MCF 10A (cell line): ENCODE measurements at regions of chr20 and their contacts with region 1.

Region 1: DNA sequence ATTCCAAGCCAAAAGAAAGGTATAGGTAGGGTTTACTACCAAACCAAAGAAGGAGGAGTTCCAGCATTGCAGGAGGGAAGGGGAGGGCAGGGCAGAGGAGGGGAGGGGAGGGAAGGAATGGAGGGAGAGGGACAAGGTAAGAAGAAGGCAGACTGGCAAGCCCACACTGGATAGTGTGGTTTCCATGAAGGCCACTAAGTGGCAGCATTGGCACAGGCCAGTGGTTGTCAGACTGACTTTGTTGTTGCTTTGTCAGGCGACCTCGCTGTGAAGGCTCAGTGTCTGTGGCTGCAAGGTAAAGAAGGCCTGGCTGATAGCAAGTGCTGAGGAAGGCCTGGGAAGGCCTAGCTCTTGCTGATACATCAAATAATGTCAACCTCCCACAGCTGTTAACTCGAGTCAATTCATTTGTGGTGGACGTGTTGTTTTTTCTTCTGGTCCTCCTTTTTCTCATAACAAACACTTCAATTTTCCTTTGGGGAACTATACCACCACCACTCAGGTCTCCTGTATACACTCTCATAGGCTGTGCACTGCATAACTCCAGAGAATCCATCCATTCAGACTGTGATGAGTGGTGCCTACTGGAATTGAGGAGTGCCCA is 7.7 kb upstream of the ZNF334 start:
- DNase-seq: peak; percentile 61
- H3K4me3 Mint-ChIP-seq: no peak overlapping the region
- H3K27ac Mint-ChIP-seq: no peak overlapping the region
- H3K4me1 Mint-ChIP-seq: no peaks in the 10 kb centered on the region
- H3K27me3 Mint-ChIP-seq: peaks cover 16% of the 10 kb centered on the region
- CTCF ChIP-seq: peak; percentile 84

Region 2: DNA sequence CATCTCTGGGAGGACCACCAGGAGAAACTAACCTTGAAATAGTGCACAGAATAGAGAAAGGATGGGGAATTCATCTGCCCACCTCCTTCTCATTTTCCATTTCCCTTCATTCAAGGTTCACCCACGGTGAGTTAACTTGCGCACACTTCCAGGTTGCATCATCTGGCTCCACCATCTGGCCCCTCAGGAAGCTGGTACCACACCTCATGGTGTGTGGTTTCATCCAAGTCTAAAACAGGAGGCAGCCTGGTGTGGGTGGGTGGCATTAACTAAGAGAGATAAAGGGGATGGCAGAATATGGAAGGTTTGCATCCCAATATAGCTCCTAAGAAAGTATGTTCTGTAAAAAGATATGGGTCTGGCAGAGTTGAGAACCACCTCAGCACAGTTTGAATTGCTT is 11.6 kb before region 1 on chr20:
- CTCF ChIA-PET with region 1: interaction called, 17 read pairs
- POLR2A ChIA-PET with region 1: interaction called, 3 read pairs
- intact Hi-C with region 1: no loop called
- DNase-seq: no peak
- H3K4me3 Mint-ChIP-seq: no peak overlapping the region
- H3K27ac Mint-ChIP-seq: no peak overlapping the region
- H3K4me1 Mint-ChIP-seq: no peaks in the 10 kb centered on the region
- H3K27me3 Mint-ChIP-seq: peaks cover 84% of the 10 kb centered on the region
- CTCF ChIP-seq: no peak

Region 3: DNA sequence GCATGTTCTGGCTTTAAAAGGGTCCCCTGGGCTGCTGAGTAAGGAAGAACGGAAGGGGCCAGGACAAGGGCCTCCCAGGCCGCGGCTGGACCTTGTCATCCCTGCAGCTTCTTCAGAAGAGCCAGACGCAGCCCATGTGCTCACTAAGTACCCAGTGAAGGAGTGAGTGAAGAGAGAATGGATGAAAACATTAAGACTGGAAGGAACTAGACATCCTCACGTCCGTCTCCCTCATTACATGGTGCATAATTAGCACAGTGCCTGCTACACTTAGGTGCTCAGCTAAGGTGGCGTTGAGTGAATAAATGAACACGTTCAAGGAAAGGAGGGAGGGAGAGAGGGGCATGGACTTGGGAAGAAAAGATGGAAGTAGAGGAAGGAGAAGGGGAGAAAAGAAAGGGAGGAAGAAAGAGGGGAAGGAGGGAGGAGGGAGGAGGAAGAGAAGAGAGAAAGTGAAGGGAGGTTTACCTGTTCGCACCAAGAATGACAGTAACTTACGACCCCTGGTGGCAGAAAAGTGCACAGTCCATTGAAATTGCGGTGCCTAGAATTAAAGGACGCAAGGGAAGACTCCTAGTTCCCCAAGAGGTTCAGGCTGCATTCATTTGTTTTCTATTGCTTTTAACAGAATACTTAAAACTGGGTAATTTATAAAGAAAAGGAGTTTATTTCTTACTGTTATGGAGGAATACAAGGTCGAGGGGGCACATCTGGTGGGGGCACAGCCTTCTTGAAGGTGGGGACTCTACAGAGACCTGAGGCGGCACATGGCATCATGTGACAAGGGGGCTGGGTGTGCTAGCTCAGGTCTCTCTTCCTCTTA is 160.2 kb after region 1 on chr20:
- CTCF ChIA-PET with region 1: interaction called, 125 read pairs
- POLR2A ChIA-PET with region 1: interaction called, 4 read pairs
- intact Hi-C with region 1: loop called (anchors 1 kb)
- DNase-seq: peak; percentile 70
- H3K4me3 Mint-ChIP-seq: no peak overlapping the region
- H3K27ac Mint-ChIP-seq: no peak overlapping the region
- H3K4me1 Mint-ChIP-seq: peaks cover 16% of the 10 kb centered on the region
- H3K27me3 Mint-ChIP-seq: no peaks in the 10 kb centered on the region
- CTCF ChIP-seq: peak; percentile 78

Region 4: DNA sequence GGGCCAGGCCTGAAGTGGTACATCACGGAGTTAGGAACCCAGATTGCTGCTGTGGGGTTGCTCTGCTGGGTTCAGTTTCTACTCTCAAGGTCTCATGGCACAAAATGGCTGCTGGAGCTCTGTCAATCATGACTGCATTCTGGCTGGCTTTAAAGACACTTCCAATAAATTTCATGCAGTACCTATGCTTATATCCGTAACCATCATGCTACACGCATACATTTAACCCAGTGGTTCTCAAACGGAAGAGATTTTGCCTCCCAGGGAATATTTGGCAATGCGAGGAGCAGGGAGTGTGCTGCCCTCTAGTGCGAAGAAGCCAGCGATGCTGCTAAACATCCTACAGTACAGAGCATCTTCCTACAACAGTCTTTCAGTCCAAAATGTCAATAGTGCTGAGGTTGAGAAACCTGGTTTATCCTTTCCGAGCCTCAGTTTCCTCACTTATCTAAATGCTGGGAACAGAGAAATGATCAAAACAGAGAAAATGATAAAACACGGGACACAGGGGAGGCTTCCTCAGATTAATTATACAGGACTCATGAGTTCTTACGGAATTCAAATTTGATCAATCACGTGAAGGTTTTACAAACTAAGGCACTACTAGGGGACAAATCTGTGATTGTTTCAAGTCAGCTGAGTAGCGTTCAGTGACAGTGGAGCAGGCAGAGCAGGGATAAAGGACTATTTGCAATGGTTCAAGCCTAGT is 178.7 kb after region 1 on chr20:
- CTCF ChIA-PET with region 1: no interaction called
- POLR2A ChIA-PET with region 1: no interaction called
- intact Hi-C with region 1: loop called (anchors 1 kb)
- DNase-seq: peak; percentile 54
- H3K4me3 Mint-ChIP-seq: no peak overlapping the region
- H3K27ac Mint-ChIP-seq: no peak overlapping the region
- H3K4me1 Mint-ChIP-seq: peaks cover 8% of the 10 kb centered on the region
- H3K27me3 Mint-ChIP-seq: no peaks in the 10 kb centered on the region
- CTCF ChIP-seq: peak; percentile 72

Region 5: GRCh38 chr20:46752728-46753127 is 231.7 kb after region 1 on chr20:
- CTCF ChIA-PET with region 1: interaction called, 4 read pairs
- POLR2A ChIA-PET with region 1: no interaction called
- intact Hi-C with region 1: loop called (anchors 1 kb)
- DNase-seq: peak; percentile 61
- H3K4me3 Mint-ChIP-seq: no peak overlapping the region
- H3K27ac Mint-ChIP-seq: no peak overlapping the region
- H3K4me1 Mint-ChIP-seq: peaks cover 5% of the 10 kb centered on the region
- H3K27me3 Mint-ChIP-seq: peaks cover 15% of the 10 kb centered on the region
- CTCF ChIP-seq: peak; percentile 59

Region 6: GRCh38 chr20:46835418-46835817 is 314.3 kb after region 1 on chr20:
- CTCF ChIA-PET with region 1: no interaction called
- POLR2A ChIA-PET with region 1: no interaction called
- intact Hi-C with region 1: no loop called
- DNase-seq: no peak
- H3K4me3 Mint-ChIP-seq: no peak overlapping the region
- H3K27ac Mint-ChIP-seq: no peak overlapping the region
- H3K4me1 Mint-ChIP-seq: no peaks in the 10 kb centered on the region
- H3K27me3 Mint-ChIP-seq: peaks cover 11% of the 10 kb centered on the region
- CTCF ChIP-seq: no peak